RWPE1 (cell line): ENCODE measurements at regions of chr11 and their contacts with region 1.

Region 1: GRCh38 chr11:114262681-114263512 is 33.3 kb upstream of the NNMT start:
- DNase-seq: peak; percentile 62
- H3K27ac ChIP-seq: no peak overlapping the region; the same call in 1 of the 2 replicates
- CTCF ChIP-seq: peak; percentile 60

Region 2: DNA sequence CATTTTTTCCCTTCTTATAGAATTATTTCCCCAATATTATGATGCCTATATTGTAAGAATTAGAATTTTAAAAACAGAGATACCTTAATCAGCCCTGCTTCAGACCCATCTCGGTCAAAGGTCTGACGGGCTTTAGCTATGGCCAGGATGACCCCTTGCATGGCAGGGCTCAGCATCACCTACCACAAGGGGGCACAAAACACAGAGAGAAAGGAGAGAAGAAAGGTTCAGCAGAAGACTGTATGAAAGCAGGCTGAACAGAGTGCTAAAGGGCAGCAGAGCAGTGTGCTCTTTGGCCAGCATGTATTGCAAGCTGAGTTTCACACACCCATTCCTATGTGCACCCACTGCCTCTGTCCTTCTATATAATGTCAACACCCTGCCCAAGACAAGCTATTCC is 456.5 kb before region 1 on chr11:
- CTCF ChIA-PET with region 1: interaction called, 11 read pairs
- POLR2A ChIA-PET with region 1: no interaction called
- DNase-seq: no peak
- H3K27ac ChIP-seq: no peak overlapping the region
- CTCF ChIP-seq: 0 out of 2 replicates have a peak, but pooled peaks have one; percentile 17

Region 3: DNA sequence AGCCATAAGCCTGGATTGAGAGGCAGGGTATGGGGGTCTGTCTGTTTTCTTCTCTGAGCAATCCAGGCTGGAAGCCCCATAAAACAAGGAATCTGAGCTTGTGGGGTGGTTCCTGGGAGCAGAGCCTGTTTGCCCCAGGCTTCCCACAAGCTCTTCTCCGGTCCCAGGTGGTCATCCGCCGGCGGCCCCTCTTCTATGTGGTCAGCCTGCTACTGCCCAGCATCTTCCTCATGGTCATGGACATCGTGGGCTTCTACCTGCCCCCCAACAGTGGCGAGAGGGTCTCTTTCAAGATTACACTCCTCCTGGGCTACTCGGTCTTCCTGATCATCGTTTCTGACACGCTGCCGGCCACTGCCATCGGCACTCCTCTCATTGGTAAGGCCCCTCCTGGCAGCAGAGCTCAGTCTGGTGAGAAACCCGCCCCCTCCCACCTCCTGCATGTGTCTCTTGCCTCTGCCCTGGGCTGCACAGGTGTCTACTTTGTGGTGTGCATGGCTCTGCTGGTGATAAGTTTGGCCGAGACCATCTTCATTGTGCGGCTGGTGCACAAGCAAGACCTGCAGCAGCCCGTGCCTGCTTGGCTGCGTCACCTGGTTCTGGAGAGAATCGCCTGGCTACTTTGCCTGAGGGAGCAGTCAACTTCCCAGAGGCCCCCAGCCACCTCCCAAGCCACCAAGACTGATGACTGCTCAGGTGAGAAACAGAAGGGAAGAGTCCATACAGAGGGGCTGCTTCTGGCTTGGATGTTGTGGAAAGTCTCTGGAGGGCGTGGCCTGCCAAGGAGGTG is 276.4 kb before region 1 on chr11:
- CTCF ChIA-PET with region 1: interaction called, 95 read pairs
- POLR2A ChIA-PET with region 1: no interaction called
- DNase-seq: no peak
- H3K27ac ChIP-seq: no peak overlapping the region
- CTCF ChIP-seq: no peak

Region 4: DNA sequence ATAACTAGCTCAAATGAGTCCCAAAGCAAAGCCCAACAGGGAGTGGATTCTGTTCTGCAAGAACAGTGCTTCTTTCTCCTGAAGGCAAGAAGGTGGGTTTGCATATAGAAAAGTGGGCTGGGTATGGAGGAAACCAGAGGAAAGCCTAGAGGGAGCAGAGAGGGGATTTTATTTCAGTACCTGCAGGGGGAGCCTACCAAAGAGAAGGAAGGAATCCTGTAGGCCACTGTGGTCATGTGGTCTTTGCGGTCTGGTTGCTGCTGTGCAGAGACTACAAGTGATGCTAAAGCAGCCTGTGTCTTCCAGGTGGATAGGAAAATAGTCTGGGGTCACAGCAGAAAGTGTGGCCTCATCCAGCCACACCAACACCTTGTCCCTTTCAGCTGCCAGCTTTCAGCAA is 236.5 kb before region 1 on chr11:
- CTCF ChIA-PET with region 1: interaction called, 49 read pairs
- POLR2A ChIA-PET with region 1: no interaction called
- DNase-seq: no peak
- H3K27ac ChIP-seq: no peak overlapping the region
- CTCF ChIP-seq: no peak

Region 5: GRCh38 chr11:114053406-114053805 is 209.5 kb before region 1 on chr11:
- CTCF ChIA-PET with region 1: interaction called, 14 read pairs
- POLR2A ChIA-PET with region 1: no interaction called
- DNase-seq: no peak
- H3K27ac ChIP-seq: no peak overlapping the region
- CTCF ChIP-seq: no peak

Region 6: DNA sequence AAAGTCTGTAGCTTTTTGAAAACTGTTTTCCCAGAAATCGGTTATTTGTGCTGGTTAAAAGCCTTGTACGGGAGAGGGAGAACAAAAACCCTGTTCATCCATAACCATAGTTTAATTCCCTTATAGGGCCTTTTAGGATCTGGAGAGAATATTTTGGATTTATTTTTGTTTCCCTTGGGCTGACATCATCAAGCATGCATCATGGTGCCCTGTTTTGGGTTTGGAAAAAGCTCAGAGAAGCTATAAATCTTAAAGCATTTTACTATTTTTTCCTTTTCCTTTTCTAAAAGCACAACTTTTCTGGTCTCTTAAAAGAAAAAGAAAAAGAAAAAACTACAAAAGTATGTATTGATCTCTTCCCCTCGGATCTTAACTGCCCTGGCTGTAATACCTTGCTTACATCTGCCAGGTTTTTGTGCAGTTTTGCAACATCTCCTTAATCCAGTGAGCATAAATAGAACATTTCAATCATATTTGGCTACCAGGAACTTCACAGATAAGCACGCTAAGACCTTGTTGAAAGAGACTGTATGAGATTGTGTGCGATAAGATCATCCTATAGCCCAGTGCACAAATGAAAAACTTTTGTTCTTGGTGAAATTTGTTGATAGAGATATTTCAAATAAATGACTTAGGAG is 115.4 kb before region 1 on chr11:
- CTCF ChIA-PET with region 1: interaction called, 13 read pairs
- POLR2A ChIA-PET with region 1: no interaction called
- DNase-seq: no peak
- H3K27ac ChIP-seq: peak overlapping the region; percentile 76
- CTCF ChIP-seq: no peak

Region 7: GRCh38 chr11:114208377-114208776 is 54.5 kb before region 1 on chr11:
- CTCF ChIA-PET with region 1: no interaction called
- POLR2A ChIA-PET with region 1: no interaction called
- DNase-seq: no peak
- H3K27ac ChIP-seq: no peak overlapping the region
- CTCF ChIP-seq: no peak

Region 8: DNA sequence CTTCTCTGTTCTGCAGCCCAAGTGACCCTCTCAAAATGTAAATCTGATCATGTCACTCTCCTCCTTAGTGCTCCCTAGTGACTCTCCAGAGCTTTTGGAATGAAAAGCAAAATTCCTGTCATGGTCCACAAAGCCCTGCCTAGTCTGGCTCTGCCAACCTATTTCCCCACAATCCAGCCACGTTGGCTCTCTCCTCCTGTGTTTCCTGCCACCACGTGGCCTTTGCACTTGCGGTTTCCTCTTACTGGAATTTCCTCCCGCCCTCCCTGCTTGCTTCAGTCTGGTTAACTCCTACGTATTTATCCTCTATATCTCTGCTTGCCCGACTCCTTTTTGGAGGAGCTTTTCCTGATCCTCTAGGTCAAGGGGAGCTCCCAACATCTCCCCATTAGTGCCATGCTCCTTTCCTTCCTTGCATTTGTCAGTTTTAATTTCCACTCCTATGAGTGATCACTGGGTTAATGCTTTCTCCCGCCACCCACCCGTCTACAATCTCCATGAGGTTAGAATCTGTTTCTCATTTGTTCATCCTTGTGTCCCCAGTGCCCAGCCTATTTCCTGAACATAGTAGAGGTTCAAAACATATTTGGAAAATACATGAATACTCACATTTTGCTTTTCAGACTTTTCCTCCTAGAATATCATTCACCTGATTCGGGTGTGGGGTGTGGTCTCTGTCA is 44.8 kb after region 1 on chr11:
- CTCF ChIA-PET with region 1: no interaction called
- POLR2A ChIA-PET with region 1: no interaction called
- DNase-seq: no peak
- H3K27ac ChIP-seq: peak overlapping the region; percentile 71
- CTCF ChIP-seq: no peak

Region 9: GRCh38 chr11:114412946-114413345 is 150.0 kb after region 1 on chr11:
- CTCF ChIA-PET with region 1: no interaction called
- POLR2A ChIA-PET with region 1: no interaction called
- DNase-seq: no peak
- H3K27ac ChIP-seq: peak overlapping the region; percentile 52
- CTCF ChIP-seq: no peak